Caco-2 (cell line): ENCODE measurements at regions of chr5 and their contacts with region 1.

Region 1: GRCh38 chr5:61479850-61480614 is 148.0 kb downstream of the ZSWIM6 start:
- DNase-seq: no peak
- H3K4me3 ChIP-seq: no peak overlapping the region
- H3K4me3 Mint-ChIP-seq: no peak overlapping the region
- H3K27ac Mint-ChIP-seq: no peak overlapping the region
- H3K4me1 ChIP-seq: no peaks in the 10 kb centered on the region
- H3K4me1 Mint-ChIP-seq: peaks cover 8% of the 10 kb centered on the region
- H3K27me3 ChIP-seq: no peaks in the 10 kb centered on the region
- H3K27me3 Mint-ChIP-seq: no peaks in the 10 kb centered on the region
- CTCF ChIP-seq: no peak

Region 2: GRCh38 chr5:61139100-61139873 is 340.7 kb before region 1 on chr5:
- CTCF ChIA-PET with region 1: no interaction called
- POLR2A ChIA-PET with region 1: no interaction called
- intact Hi-C with region 1: no loop called
- DNase-seq: peak in 1 of 2 experiments; percentile 20
- H3K4me3 ChIP-seq: no peak overlapping the region
- H3K4me3 Mint-ChIP-seq: no peak overlapping the region
- H3K27ac Mint-ChIP-seq: no peak overlapping the region
- H3K4me1 ChIP-seq: no peaks in the 10 kb centered on the region
- H3K4me1 Mint-ChIP-seq: no peaks in the 10 kb centered on the region
- H3K27me3 ChIP-seq: no peaks in the 10 kb centered on the region
- H3K27me3 Mint-ChIP-seq: no peaks in the 10 kb centered on the region
- CTCF ChIP-seq: peak; percentile 42 to 50

Region 3: GRCh38 chr5:61431923-61432620 is 48.0 kb before region 1 on chr5:
- CTCF ChIA-PET with region 1: interaction called, 10 read pairs
- POLR2A ChIA-PET with region 1: no interaction called
- intact Hi-C with region 1: no loop called
- DNase-seq: no peak
- H3K4me3 ChIP-seq: no peak overlapping the region
- H3K4me3 Mint-ChIP-seq: no peak overlapping the region
- H3K27ac Mint-ChIP-seq: no peak overlapping the region
- H3K4me1 ChIP-seq: no peaks in the 10 kb centered on the region
- H3K4me1 Mint-ChIP-seq: peaks cover 5% of the 10 kb centered on the region
- H3K27me3 ChIP-seq: no peaks in the 10 kb centered on the region
- H3K27me3 Mint-ChIP-seq: no peaks in the 10 kb centered on the region
- CTCF ChIP-seq: no peak